GM10248 (cell line): ENCODE measurements at regions of chr10 and their contacts with region 1.

Region 1: DNA sequence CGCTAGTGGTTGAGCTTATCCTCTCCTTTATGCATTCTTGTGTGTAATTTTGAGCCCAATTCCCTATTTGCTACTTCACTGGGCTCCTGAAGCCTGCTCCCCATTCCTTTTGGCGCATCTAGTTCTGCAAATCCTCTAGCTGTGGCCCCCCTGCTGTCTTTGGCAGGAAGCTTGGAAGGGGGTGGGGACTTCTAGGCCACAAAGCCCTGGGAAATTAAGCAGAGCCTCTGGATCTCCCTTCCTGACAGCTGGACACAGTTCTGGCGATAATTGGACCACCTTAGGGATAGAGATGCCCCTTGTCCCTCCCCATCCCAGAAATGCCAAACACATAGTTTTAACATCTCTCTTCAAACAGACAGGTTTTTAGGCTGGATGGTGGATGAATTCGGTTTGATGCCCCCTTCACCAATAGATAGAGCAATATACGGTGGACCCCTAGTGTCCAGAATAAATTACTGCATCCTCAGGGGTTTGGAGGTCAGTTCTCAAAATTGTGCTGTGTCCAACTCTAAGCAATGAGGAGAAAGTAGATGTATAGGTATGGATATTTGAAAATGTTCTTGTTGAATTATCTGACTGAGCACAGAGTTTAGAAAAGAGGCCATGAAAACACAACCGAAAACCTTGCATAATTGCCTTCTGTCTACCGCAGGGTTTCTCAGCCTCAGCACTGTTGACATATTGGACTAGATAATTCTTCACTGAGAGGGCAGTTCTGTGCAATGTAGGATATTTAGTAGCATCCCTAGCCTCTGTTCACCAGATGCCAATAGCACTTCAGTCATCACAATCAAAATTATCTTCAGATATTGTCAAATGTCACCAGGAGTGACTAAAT is 75.5 kb downstream of the PAPSS2 start:
- DNase-seq: peak; percentile 61
- CTCF ChIP-seq: peak; percentile 76

Region 2: DNA sequence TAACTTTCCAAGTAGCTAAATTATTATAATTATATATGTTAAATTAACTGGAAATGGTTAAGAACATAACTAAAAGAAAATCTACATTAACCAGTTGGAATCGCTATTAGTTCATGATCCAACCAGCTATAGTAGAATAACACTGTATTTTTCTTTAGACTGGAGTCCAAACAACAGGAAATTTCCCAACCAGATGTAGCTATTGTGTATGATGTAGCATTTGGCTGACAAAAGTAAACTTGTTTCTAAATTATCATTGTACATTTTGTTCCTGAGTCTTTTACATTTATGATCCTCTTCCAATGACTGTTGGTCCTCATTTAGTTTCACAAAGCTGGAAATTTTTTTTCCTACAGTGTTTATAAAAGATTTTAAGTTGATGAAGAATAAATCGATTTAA is 13.4 kb before region 1 on chr10:
- CTCF ChIA-PET with region 1: interaction called, 13 read pairs
- POLR2A ChIA-PET with region 1: no interaction called
- DNase-seq: no peak
- CTCF ChIP-seq: no peak

Region 3: GRCh38 chr10:87750001-87750671 is 14.9 kb after region 1 on chr10:
- CTCF ChIA-PET with region 1: interaction called, 24 read pairs
- POLR2A ChIA-PET with region 1: no interaction called
- DNase-seq: no peak
- CTCF ChIP-seq: no peak

Region 4: DNA sequence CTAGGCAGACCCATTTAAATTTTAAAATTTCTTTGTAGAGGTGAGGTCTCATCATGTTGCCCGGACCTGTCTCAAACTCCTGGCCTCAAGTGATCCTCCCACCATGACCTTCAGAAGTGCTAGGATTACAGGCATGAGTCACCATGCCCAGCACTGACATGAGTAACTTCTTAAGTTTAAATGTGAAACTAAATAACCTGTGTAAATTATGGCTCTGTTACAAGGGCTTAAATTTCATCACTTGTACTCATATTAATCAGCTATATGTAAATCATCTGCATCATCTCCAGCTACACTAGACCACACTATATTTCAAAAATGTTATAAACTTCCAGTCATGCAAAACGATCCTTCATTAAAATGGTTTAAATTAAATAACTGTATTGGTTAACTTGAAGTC is 26.7 kb after region 1 on chr10:
- CTCF ChIA-PET with region 1: interaction called, 11 read pairs
- POLR2A ChIA-PET with region 1: no interaction called
- DNase-seq: no peak
- CTCF ChIP-seq: no peak